Tibial artery (tissue), 4 donors: ENCODE measurements at regions of chr12 and their contacts with region 1.

Region 1: GRCh38 chr12:3261782-3262359 is 184.7 kb downstream of the TSPAN9 start:
- DNase-seq: peak; percentile 41 to 76
- H3K4me3 ChIP-seq: no peak overlapping the region
- H3K27ac ChIP-seq: peak overlapping the region; percentile 55 to 63
- H3K4me1 ChIP-seq: peaks cover 0 to 58% (median 16%) of the 10 kb centered on the region in 4 donors
- H3K27me3 ChIP-seq: no peaks in the 10 kb centered on the region
- CTCF ChIP-seq: peak; percentile 38 to 59

Region 2: DNA sequence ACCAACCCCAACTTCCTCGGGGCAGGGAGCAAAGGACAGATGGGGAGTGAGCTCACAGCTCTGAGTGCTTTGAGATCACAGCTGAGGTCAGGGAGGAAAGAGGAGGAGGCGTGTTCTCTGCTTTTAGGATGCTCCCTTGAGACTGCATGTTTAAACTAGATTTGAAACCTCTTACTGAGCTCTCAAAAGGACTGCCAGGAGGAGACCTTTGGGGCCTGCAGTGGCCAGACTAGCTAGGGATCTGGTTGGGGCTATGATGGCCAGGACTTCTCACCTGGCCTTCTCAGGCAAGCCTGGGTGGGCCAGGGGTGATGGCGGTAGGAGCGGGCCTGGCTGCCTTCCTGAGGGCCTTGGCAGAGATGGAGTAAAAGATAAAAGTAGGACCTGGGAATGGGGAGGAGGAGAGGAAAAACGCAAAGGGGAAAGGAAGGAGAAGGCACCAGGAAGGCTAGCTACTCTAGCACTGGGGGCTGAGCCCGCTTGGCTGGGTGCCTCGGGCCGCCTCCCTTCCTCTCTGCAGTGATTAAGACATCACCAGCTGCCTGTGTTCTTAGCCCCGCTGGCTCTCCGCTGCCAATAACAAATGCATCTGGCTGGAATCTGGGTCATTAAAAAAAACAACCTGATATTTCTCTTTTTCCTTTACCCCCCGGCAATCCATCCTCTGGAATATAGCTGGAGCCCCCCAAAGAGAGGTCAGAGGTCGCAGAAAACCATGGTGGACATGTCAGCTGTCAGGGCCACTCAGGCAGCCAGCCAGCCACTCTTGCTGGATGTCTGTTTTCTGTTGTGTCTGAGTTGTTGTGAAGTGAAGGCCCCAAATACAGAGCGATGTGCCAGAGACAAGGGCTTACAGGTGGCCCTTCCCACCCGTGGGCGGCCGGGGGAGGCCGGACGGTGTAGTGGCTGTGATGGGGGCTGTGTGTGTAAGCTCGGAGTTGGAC is 43.4 kb before region 1 on chr12:
- intact Hi-C with region 1: loop called (anchors 5 kb)
- DNase-seq: peak; percentile 93 to 95
- H3K4me3 ChIP-seq: no peak overlapping the region
- H3K27ac ChIP-seq: peak overlapping the region; percentile 88 to 90
- H3K4me1 ChIP-seq: peaks cover 0 to 45% (median 32%) of the 10 kb centered on the region in 4 donors
- H3K27me3 ChIP-seq: no peaks in the 10 kb centered on the region
- CTCF ChIP-seq: no peak

Region 3: GRCh38 chr12:3398196-3398789 is 136.4 kb after region 1 on chr12:
- intact Hi-C with region 1: no loop called
- DNase-seq: no peak
- H3K4me3 ChIP-seq: no peak overlapping the region
- H3K27ac ChIP-seq: no peak overlapping the region
- H3K4me1 ChIP-seq: no peaks in the 10 kb centered on the region
- H3K27me3 ChIP-seq: peaks cover 0 to 17% of the 10 kb centered on the region in 2 donors
- CTCF ChIP-seq: no peak